Endothelial cell of umbilical vein (primary cell): ENCODE measurements at regions of chr1 and their contacts with region 1.

Region 1: DNA sequence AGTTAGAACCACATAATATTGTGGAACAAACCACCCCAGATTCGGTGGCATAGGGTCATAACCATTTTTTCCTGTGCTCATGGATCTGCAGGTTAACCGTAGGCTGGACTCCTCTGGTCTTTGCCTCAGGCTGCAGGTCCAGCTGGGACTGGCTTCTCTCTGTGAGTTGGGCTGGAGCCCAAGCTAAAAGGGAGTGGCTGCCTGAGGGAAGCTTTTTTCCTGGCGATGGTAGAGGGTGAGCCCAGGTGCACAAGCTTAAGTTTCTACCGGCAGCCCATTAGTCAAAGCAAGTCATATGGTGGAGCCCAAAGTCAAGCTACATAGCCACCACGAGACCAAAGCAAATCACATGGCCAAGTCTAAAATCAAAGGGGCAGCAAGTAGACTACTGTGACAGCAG is 13.8 kb downstream of the EPHX4 start:
- DNase-seq: no peak
- H3K4me3 ChIP-seq: no peak overlapping the region
- H3K27ac ChIP-seq: no peak overlapping the region
- H3K4me1 ChIP-seq: no peaks in the 10 kb centered on the region
- H3K27me3 ChIP-seq: no peaks in the 10 kb centered on the region
- CTCF ChIP-seq: no peak
- POLR2A ChIP-seq: no peak

Region 2: DNA sequence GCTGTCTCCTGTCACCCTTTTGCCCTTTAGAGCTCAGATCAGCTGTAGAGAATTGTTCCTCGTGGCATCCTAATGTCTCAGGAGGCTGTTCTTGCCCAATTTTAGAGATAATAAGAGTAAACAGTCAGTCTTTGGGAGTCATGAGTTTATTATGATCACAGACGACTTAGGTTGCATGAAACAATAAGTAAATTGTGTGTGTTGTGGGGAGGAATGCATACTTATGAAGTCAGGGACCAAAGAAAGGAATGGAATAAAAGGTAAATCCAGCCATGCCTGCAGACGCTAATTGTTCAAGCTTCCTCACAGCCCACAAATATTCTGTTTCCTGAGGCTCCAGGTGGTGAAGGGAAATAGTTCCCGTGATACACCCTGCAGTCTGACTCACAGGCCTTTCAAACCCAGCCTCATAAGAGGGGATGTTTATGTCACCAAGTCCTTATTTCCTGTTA is 12.9 kb before region 1 on chr1:
- CTCF ChIA-PET with region 1: interaction called, 3 read pairs
- POLR2A ChIA-PET with region 1: interaction called, 4 read pairs
- dilution Hi-C with region 1: no loop called
- intact Hi-C with region 1: loop called (anchors 2 kb)
- DNase-seq: peak; percentile 76
- H3K4me3 ChIP-seq: peak overlapping the region in 2 of 3 experiments; percentile 49 to 68
- H3K27ac ChIP-seq: peak overlapping the region; percentile 71
- H3K4me1 ChIP-seq: peaks cover 21% of the 10 kb centered on the region
- H3K27me3 ChIP-seq: no peaks in the 10 kb centered on the region
- CTCF ChIP-seq: no peak
- POLR2A ChIP-seq: no peak